GM10248 (cell line): ENCODE measurements at regions of chr17 and their contacts with region 1.

Region 1: GRCh38 chr17:47802341-47803022 is 19.1 kb downstream of the OSBPL7 start:
- DNase-seq: peak; percentile 84
- CTCF ChIP-seq: peak; percentile 66

Region 2: GRCh38 chr17:47776330-47777197 is 25.9 kb before region 1 on chr17:
- CTCF ChIA-PET with region 1: interaction called, 12 read pairs
- POLR2A ChIA-PET with region 1: no interaction called
- DNase-seq: peak; percentile 73
- CTCF ChIP-seq: peak; percentile 63